Prostate gland (tissue), 2 donors: ENCODE measurements at regions of chr2 and their contacts with region 1.

Region 1: DNA sequence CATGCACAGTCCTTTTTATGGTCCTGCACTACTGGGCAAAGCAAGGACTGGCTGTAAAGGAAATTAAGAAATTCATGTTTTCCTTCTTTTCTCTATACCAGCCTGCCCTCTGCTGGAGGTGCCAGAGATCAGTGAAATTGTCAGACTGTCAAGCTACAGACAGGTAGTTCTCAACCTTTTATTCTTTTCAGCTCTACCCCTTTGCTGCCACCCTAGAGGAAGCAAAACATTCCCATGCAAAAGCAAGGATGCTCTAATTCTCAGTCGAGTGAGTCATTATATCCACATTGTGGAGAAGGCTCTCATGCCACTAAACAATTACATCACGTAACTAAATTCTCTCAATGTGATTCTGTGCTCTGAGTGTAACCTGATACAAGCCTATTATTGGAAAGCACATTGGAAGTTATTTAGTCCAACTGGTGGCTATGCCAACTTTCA is 25.0 kb upstream of the RAPGEF4 start:
- DNase-seq: peak; percentile 37
- H3K4me3 ChIP-seq: no peak overlapping the region
- H3K27ac ChIP-seq: no peak overlapping the region
- H3K4me1 ChIP-seq: no peaks in the 10 kb centered on the region
- H3K27me3 ChIP-seq: no peaks in the 10 kb centered on the region
- CTCF ChIP-seq: peak; percentile 20 to 67 (median 54)
- POLR2A ChIP-seq: no peak

Region 2: DNA sequence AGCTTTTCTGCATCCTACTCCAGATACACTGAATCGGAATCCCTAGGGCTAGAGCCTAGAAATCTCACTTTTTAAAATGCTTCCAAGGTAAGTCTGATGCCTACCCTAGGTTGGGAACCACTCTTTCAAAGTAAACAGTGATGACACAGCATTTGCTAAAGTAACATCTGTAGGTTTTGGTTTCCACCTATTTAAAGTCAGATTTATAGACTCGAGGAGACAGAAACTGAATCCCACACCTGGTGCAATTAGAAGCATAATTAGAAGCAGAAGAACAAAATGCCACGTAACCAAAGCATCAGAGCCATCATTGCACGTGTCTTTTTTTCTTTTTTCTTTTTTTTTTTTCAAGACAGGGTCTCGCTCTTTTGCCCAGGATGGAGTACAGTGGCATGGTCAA is 113.8 kb before region 1 on chr2:
- intact Hi-C with region 1: loop called (anchors 10 kb)
- DNase-seq: no peak
- H3K4me3 ChIP-seq: no peak overlapping the region
- H3K27ac ChIP-seq: no peak overlapping the region
- H3K4me1 ChIP-seq: no peaks in the 10 kb centered on the region
- H3K27me3 ChIP-seq: no peaks in the 10 kb centered on the region
- CTCF ChIP-seq: no peak
- POLR2A ChIP-seq: no peak

Region 3: DNA sequence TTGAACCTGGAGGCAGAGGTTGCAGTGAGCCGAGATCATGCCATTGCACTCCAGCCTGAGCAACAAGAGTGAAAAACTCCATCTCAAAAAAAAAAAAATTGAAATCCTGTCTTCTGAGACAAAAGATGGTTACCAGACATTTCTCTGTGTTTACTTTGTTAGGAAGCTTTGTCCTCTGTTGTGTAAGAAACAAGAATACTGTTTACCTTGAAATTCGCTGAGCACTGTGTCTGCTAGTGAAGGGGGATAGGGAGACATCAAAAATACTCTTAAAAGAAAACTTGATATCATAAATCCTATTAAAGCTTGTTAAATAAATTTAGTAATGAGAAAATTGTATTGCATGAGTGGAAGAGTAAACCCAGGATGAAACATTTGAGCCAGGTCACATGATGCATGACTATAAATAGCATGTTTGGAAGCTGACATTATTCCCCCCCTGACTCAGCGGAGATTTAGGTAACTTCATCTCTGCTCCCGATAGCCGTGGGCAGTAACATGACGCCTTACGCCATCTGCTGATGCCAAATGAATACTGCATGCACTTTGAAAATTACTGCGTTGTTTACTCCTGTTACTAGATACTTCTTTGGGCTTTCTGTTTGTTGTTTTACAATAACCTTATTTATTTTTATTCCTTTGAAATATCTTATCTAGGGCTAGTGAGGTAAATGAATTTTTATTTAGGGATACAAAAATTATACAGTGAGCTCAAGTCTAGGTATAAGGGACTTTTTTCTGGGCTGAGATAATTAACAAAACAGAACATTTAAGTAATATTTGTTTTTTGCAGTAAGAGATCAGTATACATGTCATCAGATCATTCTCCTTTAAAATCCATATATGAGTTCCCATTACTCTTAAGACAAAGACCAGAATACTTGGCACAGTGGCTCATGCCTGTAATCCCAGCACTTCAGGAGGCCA is 499.9 kb after region 1 on chr2:
- intact Hi-C with region 1: no loop called
- DNase-seq: peak; percentile 83
- H3K4me3 ChIP-seq: no peak overlapping the region
- H3K27ac ChIP-seq: peak overlapping the region; percentile 50 to 66
- H3K4me1 ChIP-seq: no peaks in the 10 kb centered on the region
- H3K27me3 ChIP-seq: no peaks in the 10 kb centered on the region
- CTCF ChIP-seq: peak; percentile 83 to 92 (median 90)
- POLR2A ChIP-seq: no peak